ENCODE measurements at regions of chr11 and their contacts with region 1.

Region 1: GRCh38 chr11:66258473-66258893 is 10.0 kb upstream of the RAB1B start:
- DNase-seq: no peak
- H3K4me3 Mint-ChIP-seq: peak overlapping the region; percentile 95
- H3K27ac Mint-ChIP-seq: peak overlapping the region; percentile 79
- H3K4me1 Mint-ChIP-seq: peaks cover 30% of the 10 kb centered on the region
- H3K27me3 Mint-ChIP-seq: no peaks in the 10 kb centered on the region

Region 2: DNA sequence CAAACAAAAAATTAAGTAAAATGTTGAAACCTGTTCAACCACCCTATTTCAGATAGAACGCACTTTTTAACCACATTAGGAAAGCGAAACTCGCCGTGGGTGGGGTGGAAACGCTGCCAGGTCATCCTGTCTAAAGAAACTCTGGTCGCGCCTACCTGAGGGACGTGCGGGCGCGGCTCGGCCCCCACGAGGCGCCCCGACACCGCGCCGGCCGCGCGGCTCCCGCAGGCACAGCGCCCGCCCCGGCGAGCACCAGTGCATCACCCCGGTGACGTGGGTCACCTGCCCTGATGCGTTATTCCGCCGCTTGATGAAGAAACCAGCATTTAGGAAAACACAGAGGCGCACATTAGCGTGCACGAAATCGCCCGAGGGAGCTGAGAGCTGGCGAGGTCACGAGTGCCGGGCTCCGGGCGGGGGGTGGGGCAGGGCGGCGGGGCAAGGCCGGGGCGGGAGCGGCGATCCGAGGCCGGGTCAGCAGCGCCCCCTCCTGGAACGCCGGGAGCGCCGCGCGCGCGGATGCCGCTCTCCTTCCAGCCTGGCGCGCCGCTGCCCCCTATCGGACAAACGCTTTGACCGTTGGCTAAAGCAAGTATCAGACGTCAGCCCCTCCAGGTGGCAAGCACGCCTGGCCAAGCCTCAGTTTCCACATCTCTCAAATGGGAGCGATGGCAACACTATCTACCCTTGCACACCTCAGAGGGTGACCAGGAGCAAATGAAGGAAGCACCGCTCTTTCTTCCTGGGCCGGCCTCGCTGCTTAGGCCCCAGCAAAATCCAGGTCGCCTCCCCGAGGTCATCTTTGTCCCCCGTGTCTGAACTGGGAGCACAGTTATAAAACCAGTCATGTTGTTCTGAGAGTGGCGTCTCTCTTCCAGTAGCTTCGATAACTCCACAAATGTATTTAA is 440.4 kb before region 1 on chr11:
- CTCF ChIA-PET with region 1: no interaction called
- intact Hi-C with region 1: no loop called
- DNase-seq: peak; percentile 96
- H3K4me3 Mint-ChIP-seq: peak overlapping the region; percentile 72
- H3K27ac Mint-ChIP-seq: peak overlapping the region; percentile 50
- H3K4me1 Mint-ChIP-seq: peaks cover 6% of the 10 kb centered on the region
- H3K27me3 Mint-ChIP-seq: no peaks in the 10 kb centered on the region

Region 3: GRCh38 chr11:66051766-66052663 is 206.5 kb before region 1 on chr11 and contains the start of gene SF3B2:
- CTCF ChIA-PET with region 1: no interaction called
- intact Hi-C with region 1: loop called (anchors 1 kb)
- DNase-seq: peak; percentile 98
- H3K4me3 Mint-ChIP-seq: peak within 1 kb of the TSS; percentile 99
- H3K27ac Mint-ChIP-seq: peak within 1 kb of the TSS; percentile 96
- H3K4me1 Mint-ChIP-seq: peaks cover 41% of the 10 kb centered on the region
- H3K27me3 Mint-ChIP-seq: peaks cover 7% of the 10 kb centered on the region
- total RNA-seq, gene SF3B2: 319 to 321 TPM